ENCODE measurements at regions of chr4 and their contacts with region 1.

Region 1: GRCh38 chr4:13920901-13921300 is 293.4 kb upstream of the BOD1L1 start:
- DNase-seq: peak; percentile 93
- H3K4me3 ChIP-seq: no peak overlapping the region
- H3K27ac ChIP-seq: peak overlapping the region; percentile 73
- H3K4me1 ChIP-seq: peaks cover 7% of the 10 kb centered on the region
- H3K27me3 ChIP-seq: no peaks in the 10 kb centered on the region
- CTCF ChIP-seq: no peak
- POLR2A ChIP-seq: no peak

Region 2: DNA sequence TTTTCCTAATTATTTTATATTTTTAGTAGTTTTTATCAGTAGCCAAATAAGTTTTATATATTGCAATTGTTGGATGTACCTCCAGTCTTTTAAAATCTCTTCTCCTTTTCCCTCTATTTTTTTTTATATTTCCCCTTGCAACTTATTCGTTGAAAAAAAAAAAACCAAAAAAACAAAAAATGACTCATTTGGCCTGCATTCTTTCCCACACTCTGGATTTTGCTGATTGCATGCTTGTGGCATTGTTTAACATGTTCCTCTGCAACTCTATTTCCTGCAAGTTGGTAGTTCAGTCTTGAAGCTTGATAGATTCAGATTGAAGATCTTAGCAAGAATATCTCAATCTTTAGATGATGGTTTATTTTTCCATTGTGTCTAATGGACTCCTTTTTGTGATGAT is 32.8 kb before region 1 on chr4:
- CTCF ChIA-PET with region 1: no interaction called
- POLR2A ChIA-PET with region 1: no interaction called
- dilution Hi-C with region 1: no loop called
- intact Hi-C with region 1: loop called (anchors 1 kb)
- DNase-seq: peak; percentile 91
- H3K4me3 ChIP-seq: no peak overlapping the region
- H3K27ac ChIP-seq: peak overlapping the region; percentile 66
- H3K4me1 ChIP-seq: peaks cover 16% of the 10 kb centered on the region
- H3K27me3 ChIP-seq: no peaks in the 10 kb centered on the region
- CTCF ChIP-seq: no peak
- POLR2A ChIP-seq: no peak

Region 3: GRCh38 chr4:13907255-13907751 is 13.6 kb before region 1 on chr4:
- CTCF ChIA-PET with region 1: interaction called, 6 read pairs
- POLR2A ChIA-PET with region 1: no interaction called
- dilution Hi-C with region 1: no loop called
- intact Hi-C with region 1: loop called (anchors 1 kb)
- DNase-seq: peak; percentile 79
- H3K4me3 ChIP-seq: no peak overlapping the region
- H3K27ac ChIP-seq: peak overlapping the region; percentile 87
- H3K4me1 ChIP-seq: peaks cover 16% of the 10 kb centered on the region
- H3K27me3 ChIP-seq: no peaks in the 10 kb centered on the region
- CTCF ChIP-seq: peak in 1 of 2 donors; percentile 10
- POLR2A ChIP-seq: no peak

Measured in endothelial cell of umbilical vein (primary cell).